WTC11 (cell line): ENCODE measurements at regions of chr16 and their contacts with region 1.

Region 1: GRCh38 chr16:30534368-30535105 is at the start of gene ZNF747:
- DNase-seq: peak; percentile 89
- ATAC-seq: peak; percentile 68
- H3K4me3 Mint-ChIP-seq: peak within 1 kb of the TSS; percentile 95
- H3K27ac Mint-ChIP-seq: peak within 1 kb of the TSS; percentile 99
- H3K4me1 Mint-ChIP-seq: peaks cover 27% of the 10 kb centered on the region
- H3K27me3 Mint-ChIP-seq: no peaks in the 10 kb centered on the region
- CTCF ChIP-seq: no peak
- total RNA-seq, gene ZNF747: 11.3 to 11.7 TPM (median 11.5 TPM) in 3 replicates

Region 2: GRCh38 chr16:30355144-30355894 is 179.2 kb before region 1 on chr16 and contains the start of gene CD2BP2:
- CTCF ChIA-PET with region 1: no interaction called
- POLR2A ChIA-PET with region 1: no interaction called
- DNase-seq: peak; percentile 94
- ATAC-seq: peak; percentile 84
- H3K4me3 Mint-ChIP-seq: peak within 1 kb of the TSS; percentile 93
- H3K27ac Mint-ChIP-seq: peak within 1 kb of the TSS; percentile 98
- H3K4me1 Mint-ChIP-seq: peaks cover 26% of the 10 kb centered on the region
- H3K27me3 Mint-ChIP-seq: no peaks in the 10 kb centered on the region; the same call in 1 of the 2 replicates
- CTCF ChIP-seq: no peak
- total RNA-seq, gene CD2BP2: 51.0 to 56.6 TPM (median 51.1 TPM) in 3 replicates

Region 3: DNA sequence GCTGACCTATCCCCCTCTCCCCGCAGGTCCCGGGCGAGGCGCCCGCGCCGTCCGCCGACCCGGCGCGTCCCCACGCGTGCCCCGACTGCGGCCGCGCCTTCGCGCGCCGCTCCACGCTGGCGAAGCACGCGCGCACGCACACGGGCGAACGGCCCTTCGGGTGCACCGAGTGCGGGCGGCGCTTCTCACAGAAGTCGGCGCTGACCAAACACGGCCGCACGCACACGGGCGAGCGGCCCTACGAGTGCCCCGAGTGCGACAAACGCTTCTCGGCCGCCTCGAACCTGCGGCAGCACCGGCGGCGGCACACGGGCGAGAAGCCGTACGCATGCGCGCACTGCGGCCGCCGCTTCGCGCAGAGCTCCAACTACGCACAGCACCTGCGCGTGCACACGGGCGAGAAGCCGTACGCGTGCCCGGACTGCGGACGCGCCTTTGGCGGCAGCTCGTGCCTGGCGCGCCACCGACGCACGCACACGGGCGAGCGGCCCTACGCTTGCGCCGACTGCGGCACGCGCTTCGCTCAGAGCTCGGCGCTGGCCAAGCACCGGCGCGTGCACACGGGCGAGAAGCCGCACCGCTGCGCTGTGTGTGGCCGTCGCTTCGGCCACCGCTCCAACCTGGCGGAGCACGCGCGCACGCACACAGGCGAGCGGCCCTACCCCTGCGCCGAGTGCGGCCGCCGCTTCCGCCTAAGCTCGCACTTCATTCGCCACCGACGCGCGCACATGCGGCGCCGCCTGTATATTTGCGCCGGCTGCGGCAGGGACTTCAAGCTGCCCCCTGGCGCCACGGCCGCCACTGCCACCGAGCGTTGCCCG is 116.8 kb before region 1 on chr16:
- CTCF ChIA-PET with region 1: interaction called, 11 read pairs
- POLR2A ChIA-PET with region 1: interaction called, 9 read pairs
- DNase-seq: peak; percentile 88
- ATAC-seq: peak; percentile 88
- H3K4me3 Mint-ChIP-seq: peak overlapping the region; percentile 54
- H3K27ac Mint-ChIP-seq: no peak overlapping the region
- H3K4me1 Mint-ChIP-seq: peaks cover 9% of the 10 kb centered on the region
- H3K27me3 Mint-ChIP-seq: no peaks in the 10 kb centered on the region
- CTCF ChIP-seq: no peak

Region 4: DNA sequence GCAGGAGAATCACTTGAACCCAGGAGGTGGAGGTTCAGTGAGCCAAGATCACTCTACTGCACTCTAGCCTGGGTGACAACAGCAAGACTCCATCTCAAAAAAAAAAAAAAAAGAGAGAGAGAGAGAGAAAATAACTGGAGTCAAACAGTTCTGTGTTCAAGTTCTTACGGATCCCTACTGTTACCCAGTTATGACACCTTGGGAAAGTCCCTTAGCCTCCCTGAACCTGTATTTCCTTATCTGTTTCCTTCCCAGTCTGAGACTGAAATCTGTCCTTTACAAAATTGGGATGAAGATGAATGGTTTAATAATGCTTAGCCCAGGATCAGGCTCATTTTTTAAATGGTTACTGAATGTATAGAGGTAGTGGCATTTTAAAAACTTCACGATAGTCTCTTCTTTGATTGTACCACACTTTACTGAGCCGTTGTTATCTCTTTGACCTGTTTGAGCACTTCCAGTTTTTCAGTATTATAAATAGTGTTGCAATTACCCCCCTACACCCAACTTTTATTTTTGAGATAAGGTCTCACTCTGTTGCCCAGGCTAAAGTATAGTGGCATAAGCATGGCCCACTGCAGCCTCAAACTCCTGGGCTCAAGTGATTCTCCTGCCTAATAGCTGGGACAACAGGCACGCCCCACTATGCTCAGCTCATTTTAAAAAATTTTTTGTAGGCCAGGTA is 25.3 kb before region 1 on chr16:
- CTCF ChIA-PET with region 1: no interaction called
- POLR2A ChIA-PET with region 1: no interaction called
- DNase-seq: no peak
- ATAC-seq: no peak
- H3K4me3 Mint-ChIP-seq: no peak overlapping the region
- H3K27ac Mint-ChIP-seq: no peak overlapping the region
- H3K4me1 Mint-ChIP-seq: no peaks in the 10 kb centered on the region
- H3K27me3 Mint-ChIP-seq: peaks cover 4% of the 10 kb centered on the region
- CTCF ChIP-seq: no peak

Region 5: GRCh38 chr16:30551781-30552180 is 17.2 kb after region 1 on chr16:
- CTCF ChIA-PET with region 1: interaction called, 39 read pairs
- POLR2A ChIA-PET with region 1: interaction called, 42 read pairs
- DNase-seq: no peak
- ATAC-seq: no peak
- H3K4me3 Mint-ChIP-seq: no peak overlapping the region
- H3K27ac Mint-ChIP-seq: no peak overlapping the region
- H3K4me1 Mint-ChIP-seq: peaks cover 27% of the 10 kb centered on the region
- H3K27me3 Mint-ChIP-seq: no peaks in the 10 kb centered on the region
- CTCF ChIP-seq: no peak

Region 6: DNA sequence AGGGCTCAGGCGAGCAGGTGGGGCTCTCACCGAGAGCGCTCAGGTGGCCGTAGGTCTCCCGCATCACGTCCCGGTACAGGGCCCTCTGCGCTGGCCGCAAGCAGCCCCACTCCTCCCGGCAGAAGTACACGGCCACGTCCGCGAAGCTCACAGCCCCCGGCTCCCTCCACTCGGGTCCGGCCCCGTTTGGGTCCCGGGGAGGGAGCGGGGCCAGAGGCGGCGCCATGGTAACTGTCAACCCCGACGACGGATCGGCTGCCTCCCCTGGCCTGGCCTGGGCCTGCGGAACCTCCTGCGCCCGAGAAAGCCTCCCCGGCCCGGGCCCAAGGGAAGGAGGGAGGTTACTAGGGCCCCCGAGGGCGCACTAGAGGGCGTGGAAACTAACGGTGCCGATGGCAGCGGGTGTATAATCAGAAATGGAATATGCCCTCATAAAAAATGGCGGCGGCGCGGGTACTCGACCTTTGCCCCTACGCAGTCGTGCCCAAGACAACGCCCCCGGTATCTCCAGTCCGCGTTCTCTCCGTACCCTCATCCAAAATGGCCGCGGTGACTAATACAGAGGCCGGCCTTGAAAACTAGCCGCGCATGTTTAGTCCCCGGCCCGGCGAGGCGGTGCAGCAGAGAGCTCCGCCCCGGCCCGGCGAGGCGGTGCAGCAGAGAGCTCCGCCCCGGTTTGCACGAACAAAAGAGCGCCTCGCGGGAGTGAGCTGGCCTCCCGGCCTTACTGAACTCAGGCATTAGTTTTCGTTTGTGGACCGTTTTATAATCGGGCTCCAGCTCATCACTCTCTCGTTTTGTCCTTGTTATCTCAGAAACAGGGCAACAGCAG is 23.6 kb after region 1 on chr16 and contains the start of gene ZNF764:
- CTCF ChIA-PET with region 1: interaction called, 39 read pairs
- POLR2A ChIA-PET with region 1: interaction called, 42 read pairs
- DNase-seq: peak; percentile 96
- ATAC-seq: peak; percentile 94
- H3K4me3 Mint-ChIP-seq: peak within 1 kb of the TSS; percentile 77
- H3K27ac Mint-ChIP-seq: peak within 1 kb of the TSS; percentile 98
- H3K4me1 Mint-ChIP-seq: peaks cover 29% of the 10 kb centered on the region
- H3K27me3 Mint-ChIP-seq: peaks cover 17% of the 10 kb centered on the region
- CTCF ChIP-seq: no peak
- total RNA-seq, gene ZNF764: 9.0 to 10.4 TPM (median 9.1 TPM) in 3 replicates

Region 7: DNA sequence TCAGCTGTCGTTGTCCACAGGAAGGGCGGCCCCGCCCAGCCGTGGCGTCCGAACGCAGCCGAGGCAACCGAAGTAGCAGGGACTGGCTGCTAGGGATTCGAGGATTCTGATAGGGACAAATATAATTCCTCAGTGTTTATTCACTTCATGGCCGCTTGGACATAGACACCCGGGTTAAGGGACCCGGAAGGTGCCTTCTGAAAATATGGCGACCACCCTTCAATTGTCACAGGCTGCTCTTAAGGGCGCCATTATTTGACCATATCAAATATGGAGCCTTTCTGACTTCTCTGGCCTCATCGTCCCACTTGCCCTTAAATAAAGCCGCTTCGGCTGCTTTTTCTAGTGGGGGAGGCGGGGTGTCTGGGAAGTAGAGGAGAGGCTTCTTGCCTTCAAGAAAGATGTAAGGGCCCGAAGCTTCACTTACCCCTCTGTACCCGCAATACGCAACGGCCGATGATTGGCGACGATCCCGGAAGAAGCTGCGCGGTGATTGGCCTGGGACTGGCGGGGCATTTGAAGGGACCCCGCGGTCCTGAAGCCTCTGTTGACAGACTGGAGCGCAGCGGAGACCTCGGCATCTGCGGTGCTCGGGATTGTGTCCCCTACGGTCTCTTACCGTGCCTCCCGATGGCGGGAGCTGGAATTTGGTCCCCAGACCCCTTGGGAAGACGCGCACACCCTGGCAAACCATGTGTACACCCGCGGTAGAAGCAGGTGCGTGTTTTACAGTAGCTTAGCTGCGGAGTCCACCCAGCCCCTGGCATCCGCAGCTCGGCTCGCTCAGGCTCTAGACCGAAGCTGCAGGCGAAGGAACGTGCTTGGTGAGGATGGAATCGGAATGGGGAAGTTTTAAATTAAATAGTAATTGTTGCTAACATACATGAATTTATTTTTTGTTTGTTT is 37.4 kb after region 1 on chr16 and contains the start of gene ZNF688:
- CTCF ChIA-PET with region 1: interaction called, 25 read pairs
- POLR2A ChIA-PET with region 1: interaction called, 22 read pairs
- DNase-seq: peak; percentile 93
- ATAC-seq: peak; percentile 87
- H3K4me3 Mint-ChIP-seq: peak within 1 kb of the TSS; percentile 91
- H3K27ac Mint-ChIP-seq: peak within 1 kb of the TSS; percentile 67
- H3K4me1 Mint-ChIP-seq: peaks cover 15% of the 10 kb centered on the region
- H3K27me3 Mint-ChIP-seq: no peaks in the 10 kb centered on the region; the same call in 1 of the 2 replicates
- CTCF ChIP-seq: no peak
- total RNA-seq, gene ZNF688: 4.2 to 6.0 TPM (median 4.9 TPM) in 3 replicates

Region 8: DNA sequence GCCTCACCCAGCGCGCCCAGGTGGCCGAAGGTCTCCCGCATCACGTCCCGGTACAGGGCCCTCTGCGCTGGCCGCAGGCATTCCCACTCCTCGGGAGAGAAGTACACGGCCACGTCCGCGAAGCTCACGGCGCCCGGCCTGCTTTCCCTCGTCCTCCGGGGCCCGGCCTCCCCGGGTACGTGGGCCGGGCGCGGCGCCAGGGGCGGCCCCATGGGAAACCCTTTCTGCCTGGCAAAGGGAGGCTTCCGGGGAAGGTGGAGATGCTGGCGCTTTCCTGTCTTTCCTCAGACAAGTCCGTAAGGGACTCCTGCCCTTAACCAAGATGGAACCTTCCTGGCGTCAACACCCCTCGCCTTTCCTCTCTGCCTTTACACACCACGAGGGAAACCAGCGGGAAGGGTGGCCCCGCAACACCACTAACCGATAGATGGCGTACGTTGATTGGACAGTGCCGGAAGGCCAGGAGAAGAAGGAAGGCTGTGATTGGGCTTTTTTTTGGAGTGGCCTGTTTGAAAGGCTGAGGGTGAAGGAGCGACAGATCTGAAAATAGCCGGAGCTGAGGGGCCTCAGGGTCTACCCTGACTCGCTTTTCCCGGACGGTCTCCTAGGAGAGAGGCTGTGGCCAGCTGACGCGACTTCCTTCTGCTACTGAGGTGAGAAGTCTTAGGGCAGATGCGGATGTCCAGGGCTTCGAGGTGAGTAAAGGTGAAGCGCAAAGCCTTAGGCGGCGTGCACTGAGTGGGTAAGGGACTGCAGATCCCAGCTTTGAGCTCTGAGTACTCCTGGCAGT is 51.1 kb after region 1 on chr16 and contains the start of gene ZNF785:
- CTCF ChIA-PET with region 1: interaction called, 11 read pairs
- POLR2A ChIA-PET with region 1: interaction called, 4 read pairs
- DNase-seq: peak; percentile 96
- ATAC-seq: peak; percentile 91
- H3K4me3 Mint-ChIP-seq: peak within 1 kb of the TSS; percentile 89
- H3K27ac Mint-ChIP-seq: peak within 1 kb of the TSS; percentile 97
- H3K4me1 Mint-ChIP-seq: peaks cover 10% of the 10 kb centered on the region; the same call in 1 of the 2 replicates
- H3K27me3 Mint-ChIP-seq: no peaks in the 10 kb centered on the region
- CTCF ChIP-seq: no peak
- total RNA-seq, gene ZNF785: 15.4 to 16.5 TPM (median 16.0 TPM) in 3 replicates

Region 9: GRCh38 chr16:30602616-30603277 is 68.2 kb after region 1 on chr16:
- CTCF ChIA-PET with region 1: interaction called, 15 read pairs
- POLR2A ChIA-PET with region 1: no interaction called
- DNase-seq: no peak
- ATAC-seq: no peak
- H3K4me3 Mint-ChIP-seq: no peak overlapping the region
- H3K27ac Mint-ChIP-seq: peak overlapping the region; percentile 57; the same call in 1 of the 2 replicates
- H3K4me1 Mint-ChIP-seq: no peaks in the 10 kb centered on the region
- H3K27me3 Mint-ChIP-seq: no peaks in the 10 kb centered on the region
- CTCF ChIP-seq: no peak

Region 10: GRCh38 chr16:30688675-30689074 is 154.1 kb after region 1 on chr16:
- CTCF ChIA-PET with region 1: no interaction called
- POLR2A ChIA-PET with region 1: no interaction called
- DNase-seq: no peak
- ATAC-seq: no peak
- H3K4me3 Mint-ChIP-seq: no peak overlapping the region
- H3K27ac Mint-ChIP-seq: no peak overlapping the region
- H3K4me1 Mint-ChIP-seq: peaks cover 19% of the 10 kb centered on the region
- H3K27me3 Mint-ChIP-seq: peaks cover 100% of the 10 kb centered on the region
- CTCF ChIP-seq: no peak